ENCODE measurements at regions of chr9 and their contacts with region 1.

Region 1: GRCh38 chr9:73683862-73684591 is 532.4 kb downstream of the ANXA1 start:
- DNase-seq: no peak
- CTCF ChIP-seq: peak; percentile 51

Region 2: DNA sequence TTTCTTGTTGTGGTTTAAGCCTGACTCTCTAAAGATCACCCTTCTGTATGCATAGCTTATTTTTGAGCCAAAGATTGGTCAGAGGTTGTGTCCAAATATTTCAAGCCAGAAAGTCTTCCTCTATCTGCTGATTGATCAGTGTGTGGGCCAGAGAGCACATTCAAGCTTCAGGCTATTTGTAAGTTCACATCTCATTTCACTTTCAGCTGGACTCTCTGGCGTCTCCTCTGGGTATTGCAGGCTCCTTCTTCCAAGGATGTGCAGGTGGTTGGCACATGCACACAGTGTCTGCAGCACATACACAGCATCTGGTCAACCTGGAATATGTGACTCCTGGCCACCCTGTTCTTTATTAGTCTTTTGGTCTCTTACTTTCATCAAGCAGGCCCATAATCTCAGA is 16.3 kb before region 1 on chr9:
- CTCF ChIA-PET with region 1: no interaction called
- POLR2A ChIA-PET with region 1: no interaction called
- DNase-seq: no peak
- CTCF ChIP-seq: no peak

Region 3: GRCh38 chr9:74379718-74380117 is 695.7 kb after region 1 on chr9:
- CTCF ChIA-PET with region 1: interaction called, 10 read pairs
- POLR2A ChIA-PET with region 1: no interaction called
- DNase-seq: no peak
- CTCF ChIP-seq: peak; percentile 32

Region 4: DNA sequence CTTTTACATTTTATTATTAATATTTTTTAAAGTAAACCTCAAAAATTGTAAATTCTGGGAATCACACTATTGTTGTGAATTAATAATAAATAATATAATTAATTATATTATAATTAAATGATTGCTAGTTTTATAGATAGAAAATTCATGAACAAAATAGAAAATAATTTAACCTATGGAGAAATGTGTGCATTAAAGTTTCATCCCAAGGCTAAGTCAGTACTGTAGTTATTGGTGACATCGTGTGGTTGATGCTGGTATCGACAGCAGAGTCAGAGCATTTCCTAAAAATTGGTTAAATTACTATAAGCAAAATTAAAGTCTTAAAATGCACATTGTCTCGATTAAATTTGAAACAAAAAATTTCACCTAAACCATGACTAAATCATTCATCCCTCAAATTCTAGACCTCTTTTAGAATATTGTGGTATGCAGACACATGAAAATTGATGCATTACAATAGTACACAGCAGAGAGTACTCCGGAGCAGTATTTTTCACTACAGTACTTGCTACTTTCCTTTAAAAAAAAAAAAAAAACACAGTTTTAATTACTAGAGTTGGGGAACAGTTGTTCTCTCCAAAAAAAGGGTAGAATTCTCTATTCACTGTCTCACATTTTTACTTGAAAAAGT is 887.0 kb after region 1 on chr9:
- CTCF ChIA-PET with region 1: interaction called, 11 read pairs
- POLR2A ChIA-PET with region 1: no interaction called
- DNase-seq: peak; percentile 25
- CTCF ChIP-seq: peak; percentile 72